Activated CD8-positive, alpha-beta T cell treated with anti-CD3 and anti-CD28 coated beads for 36 hours (primary cell): ENCODE measurements at regions of chr19 and their contacts with region 1.

Region 1: GRCh38 chr19:39792999-39793546 is 14.4 kb downstream of the LEUTX start:
- DNase-seq: peak; percentile 86
- ATAC-seq: peak; percentile 96
- H3K4me3 Mint-ChIP-seq: peak overlapping the region; percentile 75
- H3K27ac Mint-ChIP-seq: no peak overlapping the region
- H3K4me1 Mint-ChIP-seq: peaks cover 4% of the 10 kb centered on the region
- H3K27me3 Mint-ChIP-seq: peaks cover 4% of the 10 kb centered on the region
- CTCF ChIP-seq: peak; percentile 98

Region 2: DNA sequence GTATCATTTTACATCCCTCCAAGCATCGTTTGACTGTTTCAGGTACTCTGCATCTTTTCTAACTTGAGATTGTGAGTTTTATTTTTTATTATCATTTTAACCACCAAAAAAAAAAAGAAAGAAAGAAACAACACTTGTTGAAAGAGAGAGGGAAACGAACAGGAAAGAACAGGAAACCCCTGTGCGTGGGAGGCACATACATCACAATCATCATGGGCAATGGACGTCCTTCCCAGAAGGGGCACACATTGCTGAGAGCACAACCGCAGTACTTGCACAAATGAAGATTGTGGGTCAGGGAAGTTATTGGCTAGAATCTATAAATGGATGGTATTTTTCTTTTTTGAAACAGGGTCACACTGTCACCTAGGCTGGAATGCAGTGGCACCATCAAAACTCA is 57.0 kb before region 1 on chr19:
- CTCF ChIA-PET with region 1: no interaction called
- POLR2A ChIA-PET with region 1: no interaction called
- intact Hi-C with region 1: no loop called
- DNase-seq: peak; percentile 33
- ATAC-seq: no peak
- H3K4me3 Mint-ChIP-seq: no peak overlapping the region
- H3K27ac Mint-ChIP-seq: no peak overlapping the region
- H3K4me1 Mint-ChIP-seq: peaks cover 16% of the 10 kb centered on the region
- H3K27me3 Mint-ChIP-seq: peaks cover 18% of the 10 kb centered on the region
- CTCF ChIP-seq: no peak

Region 3: GRCh38 chr19:39778763-39779162 is 14.3 kb before region 1 on chr19 and contains the start of gene LEUTX:
- CTCF ChIA-PET with region 1: interaction called, 16 read pairs
- POLR2A ChIA-PET with region 1: no interaction called
- intact Hi-C with region 1: no loop called
- DNase-seq: peak; percentile 33
- ATAC-seq: peak; percentile 47
- H3K4me3 Mint-ChIP-seq: no peak within 1 kb of the TSS
- H3K27ac Mint-ChIP-seq: no peak within 1 kb of the TSS
- H3K4me1 Mint-ChIP-seq: peaks cover 4% of the 10 kb centered on the region
- H3K27me3 Mint-ChIP-seq: peaks cover 20% of the 10 kb centered on the region
- CTCF ChIP-seq: no peak
- total RNA-seq, gene LEUTX: not detected

Region 4: DNA sequence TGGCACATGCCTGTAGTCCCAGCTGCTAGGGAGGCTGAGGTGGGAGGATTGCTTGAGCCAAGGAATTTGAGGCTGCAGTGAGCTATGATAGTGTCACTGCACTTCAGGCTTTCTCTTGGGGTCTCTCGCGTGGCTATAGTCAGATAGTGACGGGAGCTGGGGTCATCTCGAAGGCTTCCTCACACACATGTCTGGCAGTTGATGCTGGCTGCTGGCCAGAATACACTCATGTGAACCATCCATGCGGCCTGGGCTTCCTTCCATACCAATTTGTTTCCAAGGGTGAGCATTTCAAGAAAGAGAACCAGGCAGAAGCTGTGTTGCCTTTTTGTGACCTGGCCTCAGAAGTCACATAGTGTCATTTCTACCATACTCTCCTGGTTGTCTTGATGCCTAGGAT is 12.0 kb after region 1 on chr19:
- CTCF ChIA-PET with region 1: interaction called, 35 read pairs
- POLR2A ChIA-PET with region 1: interaction called, 3 read pairs
- intact Hi-C with region 1: no loop called
- DNase-seq: no peak
- ATAC-seq: no peak
- H3K4me3 Mint-ChIP-seq: no peak overlapping the region
- H3K27ac Mint-ChIP-seq: no peak overlapping the region
- H3K4me1 Mint-ChIP-seq: no peaks in the 10 kb centered on the region
- H3K27me3 Mint-ChIP-seq: peaks cover 7% of the 10 kb centered on the region
- CTCF ChIP-seq: no peak

Region 5: GRCh38 chr19:39820696-39821095 is 27.6 kb after region 1 on chr19:
- CTCF ChIA-PET with region 1: interaction called, 11 read pairs
- POLR2A ChIA-PET with region 1: interaction called, 3 read pairs
- intact Hi-C with region 1: no loop called
- DNase-seq: no peak
- ATAC-seq: no peak
- H3K4me3 Mint-ChIP-seq: no peak overlapping the region
- H3K27ac Mint-ChIP-seq: no peak overlapping the region
- H3K4me1 Mint-ChIP-seq: peaks cover 17% of the 10 kb centered on the region
- H3K27me3 Mint-ChIP-seq: no peaks in the 10 kb centered on the region
- CTCF ChIP-seq: no peak

Region 6: GRCh38 chr19:39846176-39846677 is 53.2 kb after region 1 on chr19 and contains the start of gene FBL:
- CTCF ChIA-PET with region 1: interaction called, 63 read pairs
- POLR2A ChIA-PET with region 1: interaction called, 5 read pairs
- intact Hi-C with region 1: loop called (anchors 5 kb)
- DNase-seq: peak; percentile 98
- ATAC-seq: peak; percentile 90
- H3K4me3 Mint-ChIP-seq: peak within 1 kb of the TSS; percentile 91
- H3K27ac Mint-ChIP-seq: peak within 1 kb of the TSS; percentile 95
- H3K4me1 Mint-ChIP-seq: peaks cover 38% of the 10 kb centered on the region
- H3K27me3 Mint-ChIP-seq: no peaks in the 10 kb centered on the region
- CTCF ChIP-seq: no peak
- total RNA-seq, gene FBL: 901 to 905 TPM

Region 7: DNA sequence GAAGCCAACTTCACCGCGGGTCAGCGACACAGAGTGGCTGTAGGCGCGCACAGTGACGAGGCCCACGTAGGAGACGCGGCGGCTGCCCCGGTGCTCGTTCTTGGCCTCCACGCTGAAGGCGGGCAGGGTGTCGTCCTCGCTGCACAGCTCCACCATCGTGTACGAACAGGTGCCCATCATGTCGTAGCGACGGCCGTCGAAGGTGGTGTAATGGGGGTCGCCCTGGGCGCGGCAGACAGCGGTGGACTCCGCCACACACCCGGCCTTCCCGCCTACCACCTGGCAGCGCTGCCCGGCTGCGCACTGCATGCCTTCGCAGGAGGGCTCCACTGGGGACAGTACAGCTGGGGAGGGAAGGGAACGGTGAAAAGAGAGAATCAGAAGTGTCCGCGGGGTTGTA is 131.3 kb after region 1 on chr19:
- CTCF ChIA-PET with region 1: no interaction called
- POLR2A ChIA-PET with region 1: no interaction called
- intact Hi-C with region 1: no loop called
- DNase-seq: no peak
- ATAC-seq: no peak
- H3K4me3 Mint-ChIP-seq: no peak overlapping the region
- H3K27ac Mint-ChIP-seq: no peak overlapping the region
- H3K4me1 Mint-ChIP-seq: peaks cover 8% of the 10 kb centered on the region
- H3K27me3 Mint-ChIP-seq: no peaks in the 10 kb centered on the region
- CTCF ChIP-seq: no peak